Cardiac septum (tissue), 1 donor: ENCODE measurements at regions of chr9 and their contacts with region 1.

Region 1: GRCh38 chr9:92610470-92611420 is 59.2 kb downstream of the IPPK start:
- DNase-seq: no peak

Region 2: DNA sequence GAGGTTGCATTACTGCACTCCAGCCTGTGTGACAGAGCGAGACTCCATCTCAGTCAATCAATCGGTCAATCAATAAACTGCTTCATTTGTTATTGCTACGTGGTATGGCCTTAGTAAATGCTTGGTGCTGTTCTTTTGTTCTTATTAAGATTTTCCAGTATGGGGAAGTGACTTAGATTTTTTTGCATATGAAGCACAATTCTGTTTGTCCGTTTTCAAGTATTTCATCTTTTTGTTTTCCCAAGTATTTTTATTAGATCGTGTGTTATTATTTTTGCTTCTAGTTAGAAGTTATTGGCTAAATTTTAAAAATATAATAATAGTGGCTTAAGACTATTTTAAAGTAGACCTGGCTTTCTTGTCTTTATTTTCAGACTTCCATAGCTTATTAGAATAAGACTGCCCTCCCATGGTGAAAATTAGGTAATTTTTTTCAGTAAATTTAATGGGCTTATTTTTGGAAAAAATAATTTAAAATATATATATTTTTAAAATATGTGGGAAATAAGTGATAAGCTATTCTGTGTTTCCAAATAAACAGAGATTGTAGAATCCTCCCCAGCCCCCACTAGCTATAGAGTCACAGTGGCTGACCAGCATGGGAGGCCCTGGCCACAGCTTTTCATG is 171.7 kb before region 1 on chr9:
- intact Hi-C with region 1: no loop called
- DNase-seq: no peak

Region 3: DNA sequence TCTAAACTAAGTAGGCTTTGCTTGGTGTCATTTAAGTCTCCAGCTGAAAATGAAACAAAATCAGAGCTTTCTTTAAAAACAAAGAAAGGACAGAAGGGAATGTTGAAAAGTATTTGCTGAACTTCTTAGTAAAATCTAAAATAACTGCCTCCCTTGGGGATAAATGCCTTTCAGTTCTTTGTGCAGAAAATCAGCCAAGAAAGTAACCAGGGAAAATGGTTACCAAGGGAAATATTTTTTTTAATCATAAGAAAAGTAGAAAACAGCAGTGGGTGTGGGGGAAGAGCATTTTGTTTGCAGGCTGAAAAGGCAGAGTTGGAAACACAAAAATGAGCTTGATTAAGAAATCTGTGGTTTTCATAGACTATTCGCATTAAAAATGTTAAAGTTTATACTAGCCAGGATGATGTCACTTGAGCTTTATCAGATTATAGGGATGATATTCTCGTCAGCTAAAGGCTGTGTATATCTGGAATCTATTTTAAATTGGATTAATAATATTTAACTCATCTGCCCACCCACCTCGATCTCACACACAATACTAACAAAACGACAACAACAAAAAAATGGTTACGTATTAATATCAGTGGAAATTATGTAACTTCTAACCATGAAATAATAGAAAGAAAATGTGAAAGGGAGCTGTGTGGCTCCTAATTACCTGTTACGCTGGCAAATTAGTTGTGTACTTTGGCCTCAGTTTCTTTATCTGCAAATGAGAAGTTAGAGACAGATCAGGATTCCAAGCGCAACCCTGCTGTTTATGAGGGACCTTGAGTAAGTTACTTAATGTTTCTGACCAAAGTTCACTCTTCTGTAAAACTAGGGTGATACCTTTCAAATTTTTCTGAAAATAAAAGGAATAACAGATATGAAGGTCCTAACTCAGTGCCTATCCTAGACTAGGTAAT is 74.5 kb before region 1 on chr9 and contains the start of gene ECM2:
- intact Hi-C with region 1: loop called (anchors 5 kb)
- DNase-seq: no peak
- total RNA-seq, gene ECM2: 8.0 TPM

Region 4: GRCh38 chr9:92963831-92964626 is 353.3 kb after region 1 on chr9:
- intact Hi-C with region 1: no loop called
- DNase-seq: peak; percentile 82